ENCODE measurements at regions of chr7 and their contacts with region 1.

Region 1: DNA sequence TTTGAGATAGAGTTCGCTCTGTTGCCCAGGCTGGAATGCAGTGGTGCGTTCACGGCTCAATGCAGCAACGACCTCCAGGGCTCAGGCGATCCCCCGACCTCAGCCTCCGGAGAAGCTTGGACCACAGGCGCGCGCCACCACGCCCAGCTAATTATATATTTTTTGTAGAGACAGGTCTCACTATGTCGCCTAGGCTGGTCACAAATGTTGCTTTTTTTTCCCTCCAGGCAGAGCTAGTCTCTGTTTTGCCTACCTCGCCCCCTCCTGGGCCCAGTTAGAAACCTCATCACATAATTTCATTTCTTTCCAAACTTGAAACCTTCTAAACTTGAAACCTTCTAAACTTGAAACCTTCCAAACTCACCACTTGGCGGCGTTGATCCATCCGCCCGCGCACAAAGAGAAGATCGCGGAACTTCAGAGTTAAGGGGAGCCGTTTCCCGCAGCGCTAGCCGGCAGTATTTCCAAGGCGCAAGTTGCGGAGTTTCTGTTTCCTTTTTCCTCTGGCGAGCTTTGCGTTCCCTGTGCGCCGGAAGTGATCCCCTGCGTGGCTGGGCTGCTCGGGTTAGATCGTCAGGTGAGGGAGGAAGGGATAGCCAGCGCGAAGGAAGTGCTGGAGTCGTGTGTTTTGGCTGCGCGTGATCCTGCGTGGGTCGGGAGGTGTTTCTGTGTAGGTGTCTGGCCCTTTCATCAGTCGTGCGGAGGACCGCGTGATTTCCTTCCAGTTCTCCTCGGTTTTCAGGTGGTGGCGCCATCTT is at the start of gene SSBP1:
- H3K4me3 ChIP-seq: peak within 1 kb of the TSS; percentile 64
- H3K27ac ChIP-seq: peak within 1 kb of the TSS; percentile 13
- H3K4me1 ChIP-seq: no peaks in the 10 kb centered on the region
- CTCF ChIP-seq: peak; percentile 95

Region 2: DNA sequence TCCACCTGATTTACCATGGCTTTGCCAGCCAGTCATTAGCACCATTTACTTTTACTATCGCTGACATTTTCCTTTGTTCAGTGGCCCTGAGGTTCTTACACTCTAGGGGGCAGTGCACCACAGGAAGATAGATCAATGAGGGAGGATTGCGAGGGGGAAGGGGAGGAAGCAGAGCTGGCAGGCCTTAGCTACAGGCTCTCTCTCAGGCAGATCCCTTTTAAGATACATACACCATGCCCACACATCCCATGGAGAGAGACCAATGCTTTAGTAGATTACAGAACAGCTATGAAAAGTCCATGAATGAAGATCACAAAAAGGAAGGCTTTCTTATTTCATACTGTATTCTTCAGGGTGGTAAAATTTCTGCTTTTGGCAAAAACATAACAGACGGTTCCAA is 83.5 kb before region 1 on chr7:
- CTCF ChIA-PET with region 1: interaction called, 23 read pairs
- POLR2A ChIA-PET with region 1: interaction called, 6 read pairs
- H3K4me3 ChIP-seq: no peak overlapping the region
- H3K27ac ChIP-seq: no peak overlapping the region
- H3K4me1 ChIP-seq: no peaks in the 10 kb centered on the region
- CTCF ChIP-seq: peak; percentile 69

Region 3: DNA sequence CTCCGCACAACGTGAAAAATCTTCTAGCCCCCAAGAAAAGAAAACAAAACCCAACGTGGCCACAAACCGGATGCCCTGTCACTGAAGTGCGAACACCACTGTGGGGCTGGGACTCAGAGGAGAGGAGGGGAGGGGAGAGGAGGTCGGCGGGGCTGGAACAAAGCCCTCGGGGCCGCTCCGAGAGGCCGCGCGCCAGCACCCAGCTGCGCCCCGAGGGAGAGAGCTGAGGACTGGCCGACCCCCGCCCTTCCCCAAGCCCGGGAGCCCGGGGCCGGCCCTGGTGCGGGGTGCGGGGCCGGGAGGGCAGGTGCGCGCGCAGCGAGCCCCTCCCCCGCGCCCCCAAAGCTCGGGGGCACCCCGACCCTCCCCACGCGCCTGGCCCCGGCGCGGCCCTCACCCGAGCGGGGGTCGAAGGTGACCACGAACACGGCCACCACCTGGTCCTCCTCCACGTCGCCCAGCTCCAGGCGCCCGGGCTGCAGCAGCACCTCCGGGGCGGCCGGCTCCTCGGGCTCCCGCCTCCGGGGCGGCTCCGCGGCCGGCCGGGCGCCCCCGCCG is 36.4 kb before region 1 on chr7:
- CTCF ChIA-PET with region 1: interaction called, 4 read pairs
- POLR2A ChIA-PET with region 1: interaction called, 12 read pairs
- H3K4me3 ChIP-seq: peak overlapping the region; percentile 67
- H3K27ac ChIP-seq: peak overlapping the region; percentile 72; the same call in 1 of the 2 replicates
- H3K4me1 ChIP-seq: peaks cover 8% of the 10 kb centered on the region
- CTCF ChIP-seq: no peak

Region 4: DNA sequence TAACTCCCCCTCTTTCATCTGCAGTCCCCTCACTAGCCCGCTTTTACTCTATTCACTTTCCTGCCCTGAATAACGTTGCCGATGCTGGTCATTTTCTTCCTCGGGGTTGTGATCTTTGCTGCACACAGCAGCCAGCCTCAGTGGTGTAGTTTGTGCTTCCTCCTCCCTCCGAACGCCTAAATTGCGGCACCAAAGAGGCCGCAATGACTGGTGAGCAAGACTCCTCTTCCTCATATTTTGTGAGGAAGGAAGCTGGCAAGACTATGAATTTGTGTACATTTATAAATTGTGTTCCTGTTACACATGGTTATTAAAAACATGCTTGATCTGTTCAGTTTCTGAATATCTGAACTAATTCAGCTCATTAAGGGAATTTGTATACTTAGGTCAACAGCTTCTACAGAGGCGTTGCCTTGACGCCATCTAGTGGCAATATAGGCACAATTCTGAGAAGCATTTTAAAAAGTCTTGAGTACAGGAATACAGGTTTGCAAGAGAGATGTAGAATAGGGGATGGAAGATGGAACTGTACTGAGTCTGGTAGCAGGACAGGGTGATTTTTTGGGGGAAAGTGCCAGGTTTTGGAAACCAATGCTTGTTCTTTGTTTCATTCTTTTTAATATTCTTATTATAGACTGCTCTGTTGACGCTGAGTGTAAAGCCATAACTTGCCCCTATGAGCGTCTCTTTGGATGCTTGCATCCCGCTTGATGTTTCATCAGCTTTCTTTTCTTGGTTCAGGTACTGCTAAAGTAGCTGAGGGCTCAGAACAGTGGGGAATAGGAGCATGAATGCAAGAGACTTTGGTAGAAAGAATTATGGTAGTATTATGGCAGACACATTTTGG is 47.9 kb after region 1 on chr7:
- CTCF ChIA-PET with region 1: interaction called, 10 read pairs
- POLR2A ChIA-PET with region 1: no interaction called
- H3K4me3 ChIP-seq: no peak overlapping the region
- H3K27ac ChIP-seq: no peak overlapping the region
- H3K4me1 ChIP-seq: no peaks in the 10 kb centered on the region
- CTCF ChIP-seq: peak; percentile 41; the same call in 1 of the 2 replicates

Measured in HEK293 (cell line).